Activated CD4-positive, alpha-beta T cell treated with anti-CD3 and anti-CD28 coated beads, Interleukin-2, amount 10 ng/mL, durations not matched to agents 7 days and 5 days (primary cell): ENCODE measurements at regions of chr2 and their contacts with region 1.

Region 1: GRCh38 chr2:237572021-237572741 is 5.8 kb downstream of the PRLH start:
- DNase-seq: peak; percentile 87
- H3K4me3 Mint-ChIP-seq: no peak overlapping the region
- H3K27ac Mint-ChIP-seq: no peak overlapping the region
- H3K4me1 Mint-ChIP-seq: no peaks in the 10 kb centered on the region
- H3K27me3 Mint-ChIP-seq: peaks cover 1% of the 10 kb centered on the region

Region 2: DNA sequence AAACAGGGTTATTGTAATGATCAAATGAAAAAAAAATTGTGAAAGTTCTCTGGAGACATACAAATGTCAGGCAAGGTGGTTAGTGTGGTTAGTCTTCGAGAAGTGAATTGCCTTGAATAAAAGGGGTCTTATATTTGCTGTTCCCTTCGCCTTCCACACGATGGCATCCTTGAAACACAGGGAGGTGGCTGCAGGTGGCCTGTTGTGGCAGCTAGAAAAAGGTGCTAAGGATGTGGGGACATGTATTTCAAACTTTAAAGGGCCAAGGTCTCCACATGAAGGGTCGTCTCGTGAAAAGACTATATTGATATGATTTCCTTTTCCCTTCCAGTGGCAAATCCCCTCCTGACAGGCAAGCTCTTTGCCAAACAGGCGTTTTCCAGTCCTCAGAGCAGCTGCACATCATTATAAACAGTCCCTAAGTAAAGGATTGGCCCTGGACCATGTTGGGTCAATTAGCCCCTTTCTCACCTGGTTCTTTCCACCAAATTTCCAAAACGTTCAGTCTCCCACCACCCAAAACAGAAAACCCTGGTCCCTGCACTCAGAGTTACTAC is 418.0 kb before region 1 on chr2:
- CTCF ChIA-PET with region 1: interaction called, 10 read pairs
- POLR2A ChIA-PET with region 1: no interaction called
- DNase-seq: peak; percentile 65
- H3K4me3 Mint-ChIP-seq: no peak overlapping the region
- H3K27ac Mint-ChIP-seq: no peak overlapping the region
- H3K4me1 Mint-ChIP-seq: peaks cover 16% of the 10 kb centered on the region
- H3K27me3 Mint-ChIP-seq: no peaks in the 10 kb centered on the region

Region 3: GRCh38 chr2:237512774-237513466 is 59.3 kb before region 1 on chr2:
- CTCF ChIA-PET with region 1: interaction called, 41 read pairs
- POLR2A ChIA-PET with region 1: no interaction called
- DNase-seq: peak; percentile 78
- H3K4me3 Mint-ChIP-seq: no peak overlapping the region
- H3K27ac Mint-ChIP-seq: no peak overlapping the region
- H3K4me1 Mint-ChIP-seq: no peaks in the 10 kb centered on the region
- H3K27me3 Mint-ChIP-seq: peaks cover 5% of the 10 kb centered on the region